Mammary epithelial cell (primary cell): ENCODE measurements at regions of chr12 and their contacts with region 1.

Region 1: GRCh38 chr12:2267703-2268501 is 215.1 kb downstream of the CACNA1C start:
- DNase-seq: peak; percentile 19
- H3K4me3 ChIP-seq: no peak overlapping the region
- H3K27ac ChIP-seq: peak overlapping the region; percentile 24
- H3K4me1 ChIP-seq: peaks cover 30% of the 10 kb centered on the region
- H3K27me3 ChIP-seq: no peaks in the 10 kb centered on the region
- CTCF ChIP-seq: no peak

Region 2: DNA sequence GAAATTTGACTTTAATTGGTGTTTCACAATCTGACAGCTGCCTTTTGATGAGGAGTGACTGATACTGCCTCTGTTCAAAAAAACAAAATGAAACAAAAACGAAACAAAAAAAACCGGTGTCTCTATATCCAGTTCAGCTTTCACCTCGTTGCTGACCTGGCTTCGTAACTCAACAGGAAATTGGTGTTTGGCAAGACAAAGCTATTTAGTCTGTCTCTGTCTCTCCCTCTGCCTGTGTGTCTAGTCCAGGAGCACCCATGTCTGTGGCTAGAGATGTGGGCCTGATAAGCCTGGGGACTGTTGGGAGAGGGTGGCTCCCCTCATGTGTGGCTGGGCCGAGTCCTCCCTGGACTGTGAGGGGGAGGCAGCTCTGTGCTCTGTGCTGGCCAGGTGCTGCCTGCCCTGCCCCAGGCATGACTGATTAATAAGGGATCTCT is 203.8 kb before region 1 on chr12:
- CTCF ChIA-PET with region 1: no interaction called
- dilution Hi-C with region 1: no loop called
- in situ Hi-C with region 1: no loop called
- intact Hi-C with region 1: loop called (anchors 5 kb)
- DNase-seq: peak; percentile 69
- H3K4me3 ChIP-seq: peak overlapping the region in 1 of 3 experiments; percentile 24
- H3K27ac ChIP-seq: peak overlapping the region; percentile 5
- H3K4me1 ChIP-seq: peaks cover 9% of the 10 kb centered on the region
- H3K27me3 ChIP-seq: no peaks in the 10 kb centered on the region
- CTCF ChIP-seq: no peak

Region 3: GRCh38 chr12:2212971-2213869 is 54.7 kb before region 1 on chr12:
- CTCF ChIA-PET with region 1: no interaction called
- dilution Hi-C with region 1: no loop called
- in situ Hi-C with region 1: no loop called
- intact Hi-C with region 1: no loop called
- DNase-seq: no peak
- H3K4me3 ChIP-seq: no peak overlapping the region
- H3K27ac ChIP-seq: no peak overlapping the region
- H3K4me1 ChIP-seq: no peaks in the 10 kb centered on the region
- H3K27me3 ChIP-seq: no peaks in the 10 kb centered on the region
- CTCF ChIP-seq: no peak